ENCODE measurements at regions of chr1 and their contacts with region 1.

Region 1: GRCh38 chr1:39919545-39919944 is 17.8 kb upstream of the MYCL start:
- DNase-seq: peak; percentile 54 to 61
- H3K4me3 ChIP-seq: no peak overlapping the region
- H3K27ac ChIP-seq: no peak overlapping the region
- H3K4me1 ChIP-seq: no peaks in the 10 kb centered on the region
- H3K27me3 ChIP-seq: no peaks in the 10 kb centered on the region
- CTCF ChIP-seq: peak; percentile 90

Region 2: GRCh38 chr1:39816415-39817090 is 103.0 kb before region 1 on chr1:
- CTCF ChIA-PET with region 1: interaction called, 15 read pairs
- POLR2A ChIA-PET with region 1: no interaction called
- intact Hi-C with region 1: loop called (anchors 1 kb)
- DNase-seq: peak; percentile 90 to 97
- H3K4me3 ChIP-seq: no peak overlapping the region
- H3K27ac ChIP-seq: peak overlapping the region; percentile 36; the same call in 1 of the 2 replicates
- H3K4me1 ChIP-seq: peaks cover 21% of the 10 kb centered on the region
- H3K27me3 ChIP-seq: no peaks in the 10 kb centered on the region
- CTCF ChIP-seq: peak; percentile 83

Region 3: GRCh38 chr1:39829791-39830533 is 89.6 kb before region 1 on chr1:
- CTCF ChIA-PET with region 1: no interaction called
- POLR2A ChIA-PET with region 1: no interaction called
- intact Hi-C with region 1: no loop called
- DNase-seq: peak; percentile 57 to 76
- H3K4me3 ChIP-seq: no peak overlapping the region
- H3K27ac ChIP-seq: peak overlapping the region; percentile 30; the same call in 1 of the 2 replicates
- H3K4me1 ChIP-seq: peaks cover 17% of the 10 kb centered on the region
- H3K27me3 ChIP-seq: no peaks in the 10 kb centered on the region
- CTCF ChIP-seq: no peak

Region 4: GRCh38 chr1:39973503-39974135 is 54.1 kb after region 1 on chr1:
- CTCF ChIA-PET with region 1: interaction called, 13 read pairs
- POLR2A ChIA-PET with region 1: no interaction called
- intact Hi-C with region 1: loop called (anchors 1 kb)
- DNase-seq: peak; percentile 42 to 69
- H3K4me3 ChIP-seq: no peak overlapping the region
- H3K27ac ChIP-seq: no peak overlapping the region
- H3K4me1 ChIP-seq: no peaks in the 10 kb centered on the region; the same call in 1 of the 2 replicates
- H3K27me3 ChIP-seq: no peaks in the 10 kb centered on the region
- CTCF ChIP-seq: peak; percentile 98

Region 5: GRCh38 chr1:40040511-40041465 is 121.2 kb after region 1 on chr1 and contains the start of gene CAP1:
- CTCF ChIA-PET with region 1: interaction called, 4 read pairs
- POLR2A ChIA-PET with region 1: interaction called, 17 read pairs
- intact Hi-C with region 1: no loop called
- DNase-seq: peak; percentile 94 to 100
- H3K4me3 ChIP-seq: peak within 1 kb of the TSS; percentile 99
- H3K27ac ChIP-seq: peak within 1 kb of the TSS; percentile 98
- H3K4me1 ChIP-seq: peaks cover 36% of the 10 kb centered on the region
- H3K27me3 ChIP-seq: no peaks in the 10 kb centered on the region
- CTCF ChIP-seq: no peak
- total RNA-seq, gene CAP1: 322 and 354 TPM in 2 replicates

Region 6: DNA sequence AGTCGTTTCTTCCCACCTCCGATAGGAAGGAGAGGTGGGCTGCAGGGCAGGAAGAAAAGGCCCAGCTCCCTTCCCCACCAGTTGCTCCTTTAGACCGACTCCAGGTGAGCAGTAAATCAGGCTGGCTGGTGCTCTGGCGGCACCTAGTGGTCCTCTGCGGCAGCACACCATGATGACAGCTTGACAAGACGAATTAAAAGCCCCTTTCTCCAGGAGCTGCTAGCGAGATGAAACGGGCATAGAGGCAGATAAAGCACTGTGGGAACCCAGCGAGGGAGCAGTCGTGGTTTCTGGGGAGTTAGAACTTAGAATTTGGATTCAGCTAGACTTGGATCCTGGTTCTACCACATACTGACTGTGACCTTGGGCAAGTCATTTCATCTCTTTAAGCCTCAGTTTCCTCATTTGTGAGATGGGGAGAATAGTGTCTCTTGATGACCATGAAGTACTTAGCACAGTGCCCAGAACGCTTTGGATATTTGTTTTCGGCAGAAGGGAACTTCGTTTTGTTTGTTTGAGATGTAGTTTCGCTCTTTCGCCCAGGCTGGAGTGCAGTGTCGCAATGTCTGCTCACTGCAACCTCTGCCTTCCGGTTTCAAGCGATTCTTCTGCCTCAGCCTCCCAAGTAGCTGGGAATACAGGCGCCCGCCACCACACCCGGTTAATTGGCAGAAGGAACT is 419.3 kb after region 1 on chr1:
- CTCF ChIA-PET with region 1: interaction called, 17 read pairs
- POLR2A ChIA-PET with region 1: interaction called, 6 read pairs
- intact Hi-C with region 1: loop called (anchors 2 kb)
- DNase-seq: peak; percentile 71 to 93
- H3K4me3 ChIP-seq: no peak overlapping the region; the same call in 1 of the 2 replicates
- H3K27ac ChIP-seq: no peak overlapping the region
- H3K4me1 ChIP-seq: peaks cover 10% of the 10 kb centered on the region
- H3K27me3 ChIP-seq: no peaks in the 10 kb centered on the region
- CTCF ChIP-seq: peak; percentile 98

Measured in PC-9 (cell line).